Activated T-helper 1 cell treated with anti-CD3 and anti-CD28 coated beads, Interleukin-12 subunit alpha, Interleukin-12 subunit beta, Interleukin-2, Interleukin-4 antibody, amounts not matched to agents 30 ng/mL and 10 ng/mL and 1 ng/mL, durations not matched to agents 14 hours and 24 hours and 36 hours (primary cell): ENCODE measurements at regions of chr19 and their contacts with region 1.

Region 1: GRCh38 chr19:45643024-45643926 is 4.1 kb upstream of the EML2 start:
- DNase-seq: peak; percentile 86
- H3K4me3 Mint-ChIP-seq: peak overlapping the region; percentile 78
- H3K27ac Mint-ChIP-seq: peak overlapping the region; percentile 98
- H3K4me1 Mint-ChIP-seq: peaks cover 37% of the 10 kb centered on the region
- H3K27me3 Mint-ChIP-seq: no peaks in the 10 kb centered on the region

Region 2: GRCh38 chr19:45092747-45093678 is 550.3 kb before region 1 on chr19 and contains the start of gene PPP1R37:
- intact Hi-C with region 1: loop called (anchors 1 kb)
- DNase-seq: peak; percentile 92
- H3K4me3 Mint-ChIP-seq: peak within 1 kb of the TSS; percentile 84
- H3K27ac Mint-ChIP-seq: peak within 1 kb of the TSS; percentile 97
- H3K4me1 Mint-ChIP-seq: peaks cover 46% of the 10 kb centered on the region
- H3K27me3 Mint-ChIP-seq: no peaks in the 10 kb centered on the region
- total RNA-seq, gene PPP1R37: 20.4 and 20.5 TPM in 2 replicates

Region 3: GRCh38 chr19:45478454-45479238 is 164.6 kb before region 1 on chr19:
- intact Hi-C with region 1: no loop called
- DNase-seq: peak; percentile 88
- H3K4me3 Mint-ChIP-seq: peak overlapping the region; percentile 77
- H3K27ac Mint-ChIP-seq: peak overlapping the region; percentile 95
- H3K4me1 Mint-ChIP-seq: peaks cover 29% of the 10 kb centered on the region
- H3K27me3 Mint-ChIP-seq: peaks cover 38% of the 10 kb centered on the region

Region 4: GRCh38 chr19:45492627-45493470 is 150.4 kb before region 1 on chr19:
- intact Hi-C with region 1: loop called (anchors 1 kb)
- DNase-seq: no peak
- H3K4me3 Mint-ChIP-seq: peak overlapping the region; percentile 82
- H3K27ac Mint-ChIP-seq: no peak overlapping the region
- H3K4me1 Mint-ChIP-seq: peaks cover 37% of the 10 kb centered on the region
- H3K27me3 Mint-ChIP-seq: peaks cover 25% of the 10 kb centered on the region

Region 5: DNA sequence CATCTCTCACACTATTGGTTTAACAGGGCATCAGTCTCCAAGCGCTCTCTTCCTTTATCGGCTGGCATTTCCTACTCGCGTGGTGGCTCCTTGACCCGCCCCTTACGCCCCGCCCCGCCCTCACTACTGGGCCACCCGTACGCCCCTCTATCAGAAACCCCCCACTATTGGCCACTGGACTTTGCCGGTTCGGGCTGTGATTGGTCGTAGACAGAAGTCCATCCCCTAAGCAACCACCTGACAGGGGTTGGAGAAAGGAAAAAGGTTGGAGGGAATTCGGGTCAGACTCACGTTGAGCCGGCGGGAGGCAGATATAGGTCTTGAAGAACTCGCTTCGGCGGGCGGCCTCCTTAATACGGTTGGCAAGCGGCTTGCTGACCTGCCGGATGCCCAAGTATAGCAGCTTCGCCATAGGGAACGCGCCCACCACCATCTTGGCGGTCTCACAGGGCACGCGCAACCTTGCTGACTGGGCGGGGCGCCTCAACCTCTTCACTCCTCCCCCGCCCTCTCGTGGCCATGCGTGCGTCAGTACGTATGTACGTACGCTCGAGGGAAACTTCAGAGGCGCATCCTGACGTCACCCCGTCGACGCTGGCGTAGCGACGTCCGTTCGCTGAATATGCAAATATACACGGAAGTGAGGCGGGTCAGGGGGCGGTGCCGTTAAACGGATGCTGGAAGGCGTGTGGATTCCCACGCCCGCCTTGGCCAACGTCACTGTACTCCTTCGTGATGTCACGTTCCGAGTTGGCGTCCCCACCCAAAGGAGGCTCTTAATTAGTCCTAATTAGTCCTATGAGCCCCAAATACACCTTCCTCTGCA is 58.7 kb before region 1 on chr19 and contains the start of gene OPA3:
- intact Hi-C with region 1: loop called (anchors 1 kb)
- DNase-seq: peak; percentile 98
- H3K4me3 Mint-ChIP-seq: peak within 1 kb of the TSS; percentile 95
- H3K27ac Mint-ChIP-seq: peak within 1 kb of the TSS; percentile 96
- H3K4me1 Mint-ChIP-seq: peaks cover 16% of the 10 kb centered on the region
- H3K27me3 Mint-ChIP-seq: no peaks in the 10 kb centered on the region
- total RNA-seq, gene OPA3: 12.1 and 16.2 TPM in 2 replicates

Region 6: GRCh38 chr19:45632468-45633196 is 10.6 kb before region 1 on chr19:
- intact Hi-C with region 1: loop called (anchors 1 kb)
- DNase-seq: no peak
- H3K4me3 Mint-ChIP-seq: no peak overlapping the region
- H3K27ac Mint-ChIP-seq: peak overlapping the region; percentile 68
- H3K4me1 Mint-ChIP-seq: peaks cover 8% of the 10 kb centered on the region
- H3K27me3 Mint-ChIP-seq: no peaks in the 10 kb centered on the region

Region 7: GRCh38 chr19:45692187-45693105 is 49.2 kb after region 1 on chr19 and contains the start of gene QPCTL:
- intact Hi-C with region 1: loop called (anchors 1 kb)
- DNase-seq: peak; percentile 97
- H3K4me3 Mint-ChIP-seq: peak within 1 kb of the TSS; percentile 98
- H3K27ac Mint-ChIP-seq: peak within 1 kb of the TSS; percentile 99
- H3K4me1 Mint-ChIP-seq: peaks cover 5% of the 10 kb centered on the region
- H3K27me3 Mint-ChIP-seq: no peaks in the 10 kb centered on the region
- total RNA-seq, gene QPCTL: 13.7 and 18.0 TPM in 2 replicates